ENCODE measurements at regions of chr15 and their contacts with region 1.

Region 1: GRCh38 chr15:70768257-70768883 is 5.0 kb upstream of the UACA start:
- DNase-seq: peak; percentile 55
- H3K4me3 ChIP-seq: peak overlapping the region in 1 of 3 experiments; percentile 14
- H3K27ac ChIP-seq: peak overlapping the region; percentile 15
- H3K4me1 ChIP-seq: peaks cover 36% of the 10 kb centered on the region
- H3K27me3 ChIP-seq: no peaks in the 10 kb centered on the region
- CTCF ChIP-seq: no peak
- POLR2A ChIP-seq: no peak

Region 2: GRCh38 chr15:72404841-72405240 is 1636.5 kb after region 1 on chr15:
- CTCF ChIA-PET with region 1: no interaction called
- POLR2A ChIA-PET with region 1: interaction called, 10 read pairs
- dilution Hi-C with region 1: no loop called
- intact Hi-C with region 1: no loop called
- DNase-seq: peak; percentile 47
- H3K4me3 ChIP-seq: no peak overlapping the region
- H3K27ac ChIP-seq: no peak overlapping the region
- H3K4me1 ChIP-seq: no peaks in the 10 kb centered on the region
- H3K27me3 ChIP-seq: peaks cover 12 to 13% of the 10 kb centered on the region in 2 experiments
- CTCF ChIP-seq: no peak
- POLR2A ChIP-seq: no peak